OCI-LY7 (cell line): ENCODE measurements at regions of chr20 and their contacts with region 1.

Region 1: GRCh38 chr20:53786445-53787267 is 193.0 kb upstream of the ZNF217 start:
- DNase-seq: peak; percentile 22
- H3K4me3 ChIP-seq: no peak overlapping the region
- H3K27ac ChIP-seq: no peak overlapping the region
- H3K4me1 ChIP-seq: peaks cover 12% of the 10 kb centered on the region
- CTCF ChIP-seq: no peak

Region 2: GRCh38 chr20:53773792-53774401 is 12.8 kb before region 1 on chr20:
- CTCF ChIA-PET with region 1: no interaction called
- POLR2A ChIA-PET with region 1: interaction called, 22 read pairs
- intact Hi-C with region 1: no loop called
- DNase-seq: no peak
- H3K4me3 ChIP-seq: no peak overlapping the region
- H3K27ac ChIP-seq: no peak overlapping the region
- H3K4me1 ChIP-seq: no peaks in the 10 kb centered on the region
- CTCF ChIP-seq: no peak

Region 3: DNA sequence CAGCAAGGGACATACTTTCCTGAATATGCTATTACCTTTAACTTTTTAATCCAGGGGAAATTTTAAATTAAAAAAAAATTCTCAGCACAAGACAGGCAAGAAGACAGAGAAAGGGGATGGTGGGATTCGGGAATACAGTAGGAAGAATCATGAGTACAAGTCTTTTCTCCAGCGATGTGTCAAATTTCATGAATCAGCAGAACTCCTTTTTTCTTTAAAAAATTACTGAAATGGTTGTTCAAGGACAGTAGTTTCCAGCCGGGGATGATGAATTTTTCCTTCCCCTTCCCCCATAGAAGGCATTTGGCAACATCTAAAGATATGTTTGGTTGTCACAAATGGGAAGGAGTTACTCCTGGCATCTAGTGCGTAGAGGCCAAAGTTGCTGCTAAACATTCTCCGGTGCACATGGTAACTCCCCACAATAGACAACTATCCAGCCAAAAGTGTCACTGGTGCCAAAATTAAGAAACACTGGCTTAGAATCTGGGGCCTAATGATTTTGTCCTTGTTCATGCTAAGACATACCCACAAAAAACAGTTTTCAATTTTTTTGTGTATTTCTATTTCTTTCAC is 1768.5 kb after region 1 on chr20:
- CTCF ChIA-PET with region 1: no interaction called
- POLR2A ChIA-PET with region 1: no interaction called
- intact Hi-C with region 1: no loop called
- DNase-seq: no peak
- H3K4me3 ChIP-seq: no peak overlapping the region
- H3K27ac ChIP-seq: no peak overlapping the region
- H3K4me1 ChIP-seq: no peaks in the 10 kb centered on the region
- CTCF ChIP-seq: no peak